ENCODE measurements at regions of chr19 and their contacts with region 1.

Region 1: DNA sequence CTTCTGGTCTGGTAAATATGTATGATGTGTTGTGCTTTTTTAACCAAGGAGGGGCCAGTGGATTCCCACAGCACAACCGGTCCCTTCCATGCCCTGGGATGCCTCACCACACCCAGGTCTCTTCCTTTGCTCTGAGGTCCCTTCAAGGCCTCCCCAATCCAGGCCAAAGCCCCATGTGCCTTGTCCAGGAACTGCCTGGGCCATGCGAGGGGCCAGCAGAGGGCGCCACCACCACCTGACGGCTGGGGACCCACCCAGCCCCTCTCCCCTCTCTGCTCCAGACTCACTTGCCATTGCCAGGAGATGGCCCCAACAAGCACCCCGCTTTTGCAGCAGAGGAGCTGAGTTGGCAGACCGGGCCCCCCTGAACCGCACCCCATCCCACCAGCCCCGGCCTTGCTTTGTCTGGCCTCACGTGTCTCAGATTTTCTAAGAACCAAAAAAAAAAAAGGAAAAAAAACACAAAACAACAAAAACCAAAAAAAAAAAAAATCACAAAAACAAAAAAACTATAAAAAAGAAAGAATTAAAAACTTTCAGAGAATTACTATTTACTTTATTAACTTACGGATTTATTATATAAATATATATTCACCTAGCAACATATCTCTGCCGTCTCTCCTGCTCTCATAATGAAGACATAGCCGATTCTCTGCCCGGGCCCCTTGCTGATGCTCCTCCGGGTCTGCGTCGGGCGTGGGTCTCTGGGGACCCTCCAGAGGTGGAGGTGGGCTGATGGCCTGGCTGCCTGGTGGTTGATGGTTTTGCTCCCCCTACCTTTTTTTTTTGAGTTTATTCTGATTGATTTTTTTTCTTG is 14.4 kb downstream of the CAPN12 start:
- DNase-seq: peak; percentile 67 to 86 (median 72)
- ATAC-seq: peak; percentile 75
- H3K4me3 ChIP-seq: no peak overlapping the region
- H3K4me3 Mint-ChIP-seq: peak overlapping the region; percentile 30
- H3K27ac ChIP-seq: no peak overlapping the region
- H3K27ac Mint-ChIP-seq: peak overlapping the region; percentile 36
- H3K4me1 ChIP-seq: peaks cover 40% of the 10 kb centered on the region
- H3K4me1 Mint-ChIP-seq: peaks cover 15% of the 10 kb centered on the region
- H3K27me3 ChIP-seq: no peaks in the 10 kb centered on the region
- H3K27me3 Mint-ChIP-seq: no peaks in the 10 kb centered on the region
- CTCF ChIP-seq: peak; percentile 88

Region 2: GRCh38 chr19:38387550-38388348 is 342.1 kb before region 1 on chr19 and contains the start of gene GGN:
- CTCF ChIA-PET with region 1: no interaction called
- POLR2A ChIA-PET with region 1: no interaction called
- intact Hi-C with region 1: loop called in 1 of 2 experiments (anchors 5 kb)
- DNase-seq: peak; percentile 59 to 91 (median 75)
- ATAC-seq: peak; percentile 74
- H3K4me3 ChIP-seq: peak within 1 kb of the TSS; percentile 58
- H3K4me3 Mint-ChIP-seq: peak within 1 kb of the TSS; percentile 94
- H3K27ac ChIP-seq: no peak within 1 kb of the TSS
- H3K27ac Mint-ChIP-seq: peak within 1 kb of the TSS; percentile 70
- H3K4me1 ChIP-seq: peaks cover 44% of the 10 kb centered on the region
- H3K4me1 Mint-ChIP-seq: peaks cover 29% of the 10 kb centered on the region
- H3K27me3 ChIP-seq: peaks cover 17 to 18% of the 10 kb centered on the region in 2 experiments
- H3K27me3 Mint-ChIP-seq: peaks cover 39% of the 10 kb centered on the region
- CTCF ChIP-seq: no peak
- total RNA-seq, gene GGN: 0.17 to 0.19 TPM

Region 3: GRCh38 chr19:38514812-38515633 is 214.8 kb before region 1 on chr19:
- CTCF ChIA-PET with region 1: no interaction called
- POLR2A ChIA-PET with region 1: no interaction called
- intact Hi-C with region 1: loop called in 1 of 2 experiments (anchors 5 kb)
- DNase-seq: peak; percentile 62 to 88 (median 76)
- ATAC-seq: peak; percentile 98
- H3K4me3 ChIP-seq: no peak overlapping the region
- H3K4me3 Mint-ChIP-seq: no peak overlapping the region
- H3K27ac ChIP-seq: no peak overlapping the region
- H3K27ac Mint-ChIP-seq: no peak overlapping the region
- H3K4me1 ChIP-seq: peaks cover 15% of the 10 kb centered on the region
- H3K4me1 Mint-ChIP-seq: peaks cover 9% of the 10 kb centered on the region
- H3K27me3 ChIP-seq: no peaks in the 10 kb centered on the region
- H3K27me3 Mint-ChIP-seq: no peaks in the 10 kb centered on the region
- CTCF ChIP-seq: peak; percentile 94

Region 4: GRCh38 chr19:38647368-38647965 is 82.4 kb before region 1 on chr19 and contains the start of gene ACTN4:
- CTCF ChIA-PET with region 1: no interaction called
- POLR2A ChIA-PET with region 1: no interaction called
- intact Hi-C with region 1: loop called in 1 of 2 experiments (anchors 5 kb)
- DNase-seq: peak; percentile 99 to 100 (median 100)
- ATAC-seq: peak; percentile 92
- H3K4me3 ChIP-seq: peak within 1 kb of the TSS; percentile 96
- H3K4me3 Mint-ChIP-seq: peak within 1 kb of the TSS; percentile 85
- H3K27ac ChIP-seq: peak within 1 kb of the TSS; percentile 21 to 41
- H3K27ac Mint-ChIP-seq: peak within 1 kb of the TSS; percentile 75
- H3K4me1 ChIP-seq: peaks cover 50% of the 10 kb centered on the region
- H3K4me1 Mint-ChIP-seq: peaks cover 37% of the 10 kb centered on the region
- H3K27me3 ChIP-seq: peaks cover 3 to 9% of the 10 kb centered on the region in 2 experiments
- H3K27me3 Mint-ChIP-seq: peaks cover 37% of the 10 kb centered on the region
- CTCF ChIP-seq: no peak
- total RNA-seq, gene ACTN4: 70.3 to 84.0 TPM

Region 5: GRCh38 chr19:38707512-38708114 is 22.2 kb before region 1 on chr19:
- CTCF ChIA-PET with region 1: no interaction called
- POLR2A ChIA-PET with region 1: no interaction called
- intact Hi-C with region 1: no loop called
- DNase-seq: no peak
- ATAC-seq: no peak
- H3K4me3 ChIP-seq: no peak overlapping the region
- H3K4me3 Mint-ChIP-seq: no peak overlapping the region
- H3K27ac ChIP-seq: no peak overlapping the region
- H3K27ac Mint-ChIP-seq: no peak overlapping the region
- H3K4me1 ChIP-seq: peaks cover 2% of the 10 kb centered on the region
- H3K4me1 Mint-ChIP-seq: no peaks in the 10 kb centered on the region
- H3K27me3 ChIP-seq: no peaks in the 10 kb centered on the region
- H3K27me3 Mint-ChIP-seq: no peaks in the 10 kb centered on the region
- CTCF ChIP-seq: no peak

Region 6: GRCh38 chr19:38849860-38850435 is 120.1 kb after region 1 on chr19 and contains the start of gene HNRNPL:
- CTCF ChIA-PET with region 1: no interaction called
- POLR2A ChIA-PET with region 1: interaction called, 3 read pairs
- intact Hi-C with region 1: loop called in 1 of 2 experiments (anchors 10 kb)
- DNase-seq: peak; percentile 98 to 100 (median 99)
- ATAC-seq: peak; percentile 69
- H3K4me3 ChIP-seq: peak within 1 kb of the TSS; percentile 76
- H3K4me3 Mint-ChIP-seq: peak within 1 kb of the TSS; percentile 98
- H3K27ac ChIP-seq: peak within 1 kb of the TSS; percentile 95 to 97
- H3K27ac Mint-ChIP-seq: peak within 1 kb of the TSS; percentile 97
- H3K4me1 ChIP-seq: peaks cover 66% of the 10 kb centered on the region
- H3K4me1 Mint-ChIP-seq: peaks cover 63% of the 10 kb centered on the region
- H3K27me3 ChIP-seq: no peaks in the 10 kb centered on the region
- H3K27me3 Mint-ChIP-seq: no peaks in the 10 kb centered on the region
- CTCF ChIP-seq: peak; percentile 16
- total RNA-seq, gene HNRNPL: 535 to 565 TPM